Endothelial cell of umbilical vein (primary cell): ENCODE measurements at regions of chr5 and their contacts with region 1.

Region 1: GRCh38 chr5:163552536-163552935 is 47.1 kb downstream of the MAT2B start:
- DNase-seq: no peak
- H3K4me3 ChIP-seq: no peak overlapping the region
- H3K27ac ChIP-seq: no peak overlapping the region
- H3K4me1 ChIP-seq: peaks cover 5% of the 10 kb centered on the region
- H3K27me3 ChIP-seq: peaks cover 0 to 5% of the 10 kb centered on the region in 2 experiments
- CTCF ChIP-seq: no peak
- POLR2A ChIP-seq: no peak

Region 2: GRCh38 chr5:163585206-163585605 is 32.7 kb after region 1 on chr5:
- CTCF ChIA-PET with region 1: no interaction called
- POLR2A ChIA-PET with region 1: no interaction called
- dilution Hi-C with region 1: no loop called
- intact Hi-C with region 1: loop called (anchors 1 kb)
- DNase-seq: no peak
- H3K4me3 ChIP-seq: no peak overlapping the region
- H3K27ac ChIP-seq: no peak overlapping the region
- H3K4me1 ChIP-seq: no peaks in the 10 kb centered on the region
- H3K27me3 ChIP-seq: no peaks in the 10 kb centered on the region
- CTCF ChIP-seq: no peak
- POLR2A ChIP-seq: no peak